ENCODE measurements at regions of chr22 and their contacts with region 1.

Region 1: DNA sequence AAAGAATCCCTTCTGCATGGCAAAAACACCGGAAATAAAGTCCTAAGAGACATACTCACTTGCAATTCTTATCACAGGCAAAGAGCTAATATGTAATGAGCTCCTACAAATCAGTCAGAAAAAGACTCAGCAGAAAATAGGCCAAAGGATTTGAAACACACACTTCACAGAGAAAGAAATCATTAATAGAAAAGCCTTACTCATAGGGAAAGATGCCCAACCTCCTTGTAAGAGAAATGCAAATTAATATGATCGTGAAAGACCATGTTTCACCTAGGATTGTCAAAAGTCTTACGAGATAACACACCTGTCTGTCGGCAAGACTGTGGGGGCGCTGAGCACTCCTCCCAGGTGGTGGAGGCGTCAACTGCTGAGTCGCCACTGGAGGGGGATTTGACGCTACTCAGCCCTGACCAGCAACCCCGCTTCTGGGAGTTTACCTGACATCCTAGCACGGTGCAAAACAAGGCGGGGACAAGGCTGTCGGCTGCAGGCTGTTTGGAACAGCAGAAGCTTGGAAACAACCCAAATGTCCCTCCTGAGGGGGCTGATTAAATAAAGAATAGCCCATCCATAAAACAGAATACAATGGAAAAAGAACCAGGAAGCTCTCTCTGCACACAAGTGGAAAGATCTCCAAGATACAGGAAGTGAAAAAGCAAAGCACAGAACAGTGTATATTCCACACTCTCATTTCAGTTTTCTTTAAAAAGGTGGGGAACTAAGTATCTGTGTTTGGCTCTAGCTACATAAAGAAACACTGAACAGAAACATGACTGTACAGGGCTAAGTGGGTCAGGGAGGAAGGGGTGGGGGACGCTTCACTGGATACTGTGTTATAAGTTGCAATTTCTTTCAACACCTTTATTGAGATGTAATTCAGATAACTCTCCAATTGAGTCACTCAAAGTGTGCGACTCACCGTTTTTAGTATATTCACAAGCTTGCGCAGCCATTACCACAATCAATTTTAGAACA is 11.5 kb downstream of the CSNK1E start:
- DNase-seq: peak in 1 of 3 donors; percentile 37
- H3K4me3 ChIP-seq: no peak overlapping the region
- H3K27ac ChIP-seq: peak overlapping the region in 1 of 2 experiments; percentile 20
- H3K4me1 ChIP-seq: peaks cover 0 to 10% (median 7%) of the 10 kb centered on the region in 4 experiments
- H3K27me3 ChIP-seq: no peaks in the 10 kb centered on the region

Region 2: DNA sequence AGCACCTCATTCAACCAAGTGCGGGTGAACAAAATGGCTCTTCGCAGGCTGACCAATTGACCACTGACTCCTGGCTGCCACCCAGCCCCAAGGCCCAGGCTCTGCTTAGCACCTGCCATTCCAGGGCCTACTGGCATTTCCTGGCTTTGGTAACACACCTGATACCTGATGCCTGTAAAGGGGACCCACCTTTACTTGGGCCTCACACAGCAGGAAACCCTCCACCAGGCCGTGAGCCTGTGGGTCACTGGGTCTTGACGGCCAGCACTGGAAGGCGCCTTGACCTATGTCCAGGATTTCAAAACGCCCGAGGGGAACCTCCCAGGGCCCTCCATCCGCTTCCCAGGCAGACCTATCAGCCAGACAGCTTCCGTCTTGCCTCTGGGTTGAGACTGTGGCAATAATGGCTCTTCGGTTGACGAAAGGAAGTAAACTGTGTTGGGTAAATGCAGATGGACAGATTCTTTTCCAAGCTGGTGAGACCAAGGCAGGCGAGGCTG is 16.1 kb before region 1 on chr22:
- CTCF ChIA-PET with region 1: no interaction called
- POLR2A ChIA-PET with region 1: no interaction called
- DNase-seq: no peak
- H3K4me3 ChIP-seq: no peak overlapping the region
- H3K27ac ChIP-seq: no peak overlapping the region
- H3K4me1 ChIP-seq: no peaks in the 10 kb centered on the region
- H3K27me3 ChIP-seq: no peaks in the 10 kb centered on the region

Region 3: DNA sequence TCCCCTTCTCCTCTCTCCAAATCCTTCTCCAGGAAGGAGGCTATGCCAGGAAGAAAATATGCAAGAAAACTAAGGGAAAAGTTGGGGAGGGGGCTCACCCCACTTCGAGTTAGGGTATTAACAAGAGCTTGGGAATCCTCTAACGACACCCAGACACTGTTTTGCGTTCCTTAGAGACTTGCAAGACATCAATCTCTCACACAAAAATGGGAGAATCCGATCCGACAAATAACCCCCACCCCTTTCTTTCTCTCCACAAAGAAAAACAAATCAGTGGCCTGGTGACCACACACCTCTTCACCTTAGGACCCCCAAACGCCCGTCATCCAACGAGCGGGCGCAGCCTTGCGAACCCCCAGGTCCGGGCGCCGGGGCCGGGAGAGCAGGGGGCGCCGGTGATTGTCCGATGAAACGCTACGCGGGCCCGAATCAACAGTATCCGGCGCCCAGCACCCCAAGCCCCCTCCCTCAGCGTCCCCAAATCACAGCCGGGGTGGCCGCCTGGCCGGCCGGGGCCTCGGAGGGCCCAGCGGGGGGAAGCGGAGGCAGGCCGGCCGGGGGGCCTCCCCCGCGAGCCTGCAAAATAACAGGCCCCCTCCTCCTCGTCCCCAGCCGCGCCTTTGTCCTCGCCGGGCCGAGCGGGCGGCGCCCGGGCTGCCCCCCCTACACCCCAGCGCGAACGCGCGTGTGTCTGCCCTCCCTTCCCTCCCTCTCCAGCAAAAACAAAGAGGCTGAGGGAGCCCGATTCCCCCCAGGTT is 10.8 kb after region 1 on chr22:
- CTCF ChIA-PET with region 1: interaction called, 12 read pairs
- POLR2A ChIA-PET with region 1: no interaction called
- DNase-seq: peak; percentile 47 to 80 (median 67)
- H3K4me3 ChIP-seq: peak overlapping the region; percentile 61 to 86 (median 80)
- H3K27ac ChIP-seq: peak overlapping the region; percentile 77 to 84
- H3K4me1 ChIP-seq: peaks cover 6 to 51% (median 47%) of the 10 kb centered on the region in 4 experiments
- H3K27me3 ChIP-seq: no peaks in the 10 kb centered on the region